PC-3 (cell line): ENCODE measurements at regions of chr18 and their contacts with region 1.

Region 1: DNA sequence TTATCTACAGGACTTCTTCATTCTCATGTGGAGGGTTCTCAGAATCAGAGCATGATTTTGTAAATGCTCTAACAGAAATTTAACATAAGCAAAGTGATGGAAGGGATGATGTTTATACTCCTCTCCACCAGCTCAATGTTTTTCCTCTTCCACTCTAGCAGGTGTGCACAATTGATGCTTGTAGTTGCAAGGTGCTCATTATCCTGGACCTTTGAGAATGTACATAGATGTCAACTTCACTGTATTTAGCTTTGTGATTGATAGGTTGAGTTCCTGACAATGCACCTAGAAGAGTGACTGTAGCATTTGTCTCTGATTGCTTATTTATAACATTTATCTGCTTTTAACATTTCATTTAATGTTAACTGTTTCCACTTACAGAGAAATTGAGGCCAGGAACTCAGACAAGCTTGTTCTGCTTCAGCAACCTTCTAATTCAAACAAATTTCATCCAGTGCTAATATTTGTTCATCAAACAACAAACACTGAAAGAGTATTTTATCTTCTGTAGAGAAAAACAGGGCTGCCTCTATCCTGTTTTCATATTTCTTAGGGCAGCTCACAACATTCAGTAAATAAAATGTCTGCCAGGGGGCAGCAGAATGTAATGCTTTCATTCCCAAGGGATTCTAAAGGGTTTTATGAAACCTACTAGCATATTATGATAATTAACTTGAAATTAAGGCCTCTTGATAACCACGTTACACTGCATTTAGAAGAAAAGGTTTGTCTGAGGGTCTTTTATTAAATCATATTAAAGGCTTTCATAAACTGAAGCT is 127.9 kb upstream of the NOL4 start:
- DNase-seq: peak; percentile 45
- ATAC-seq: peak; percentile 51
- H3K4me3 ChIP-seq: no peak overlapping the region
- H3K27ac ChIP-seq: no peak overlapping the region
- H3K4me1 ChIP-seq: 0 out of 2 replicates have a peak, but pooled peaks cover 3% of the 10 kb centered on the region
- H3K27me3 ChIP-seq: no peaks in the 10 kb centered on the region
- CTCF ChIP-seq: peak; percentile 56

Region 2: DNA sequence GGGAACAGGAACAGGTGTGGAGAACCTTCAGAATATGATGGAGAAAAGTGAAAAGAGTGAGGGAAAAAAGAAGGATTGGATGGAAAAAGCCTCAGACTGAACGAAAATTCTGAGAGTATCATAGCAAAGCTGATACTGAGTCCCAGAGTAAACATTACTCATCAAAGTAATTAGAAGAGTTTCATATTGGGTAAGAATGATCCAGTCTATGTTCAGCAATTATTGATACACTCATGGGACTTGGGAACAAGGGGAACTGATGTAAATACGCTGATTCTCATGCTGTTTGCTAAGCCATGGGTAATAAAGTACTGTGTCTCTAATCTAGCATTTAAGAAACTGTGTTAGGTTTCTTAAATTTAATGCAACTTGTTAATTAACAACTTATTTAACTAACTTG is 92.0 kb after region 1 on chr18:
- CTCF ChIA-PET with region 1: no interaction called
- POLR2A ChIA-PET with region 1: no interaction called
- intact Hi-C with region 1: loop called (anchors 2 kb)
- DNase-seq: peak; percentile 2
- ATAC-seq: no peak; the same call in 1 of the 2 replicates
- H3K4me3 ChIP-seq: no peak overlapping the region
- H3K27ac ChIP-seq: no peak overlapping the region
- H3K4me1 ChIP-seq: peaks cover 8% of the 10 kb centered on the region; the same call in 1 of the 2 replicates
- H3K27me3 ChIP-seq: no peaks in the 10 kb centered on the region
- CTCF ChIP-seq: no peak

Region 3: GRCh38 chr18:34493099-34493544 is 140.5 kb after region 1 on chr18:
- CTCF ChIA-PET with region 1: no interaction called
- POLR2A ChIA-PET with region 1: no interaction called
- intact Hi-C with region 1: loop called (anchors 5 kb)
- DNase-seq: peak; percentile 64
- ATAC-seq: peak; percentile 75
- H3K4me3 ChIP-seq: peak overlapping the region; percentile 70
- H3K27ac ChIP-seq: peak overlapping the region; percentile 79
- H3K4me1 ChIP-seq: peaks cover 6% of the 10 kb centered on the region; the same call in 1 of the 2 replicates
- H3K27me3 ChIP-seq: no peaks in the 10 kb centered on the region
- CTCF ChIP-seq: no peak

Region 4: DNA sequence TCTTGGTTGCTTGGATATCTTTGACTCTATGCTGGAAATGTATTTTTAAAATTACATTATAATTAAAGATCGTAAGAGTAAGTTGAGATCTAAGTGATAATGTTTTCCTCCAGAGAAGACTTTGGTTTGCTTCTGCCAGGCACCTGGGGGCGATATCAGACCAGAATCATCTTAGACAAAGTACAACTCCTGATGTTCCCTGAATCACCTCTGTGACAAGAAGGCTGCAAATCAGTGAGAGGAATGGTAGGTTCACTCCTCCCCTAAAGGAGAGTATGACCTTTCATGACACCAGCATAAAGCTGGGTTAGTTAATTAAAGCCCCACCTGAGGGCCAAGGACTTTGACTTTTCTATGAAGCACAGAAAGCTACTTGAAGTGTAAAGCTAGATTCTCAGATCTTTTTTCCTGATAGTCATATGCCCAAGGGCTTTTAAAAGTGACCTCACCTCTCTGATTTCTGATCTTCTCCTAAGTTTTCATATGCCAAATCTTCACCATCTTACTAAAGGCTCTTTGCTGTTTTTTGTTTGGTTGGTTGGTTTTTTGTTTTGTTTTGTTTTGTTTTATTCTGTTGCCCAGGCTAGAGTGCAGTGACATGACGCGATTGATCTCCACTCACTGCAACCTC is 243.2 kb after region 1 on chr18:
- CTCF ChIA-PET with region 1: no interaction called
- POLR2A ChIA-PET with region 1: no interaction called
- intact Hi-C with region 1: loop called (anchors 5 kb)
- DNase-seq: peak; percentile 8
- ATAC-seq: peak; percentile 42; the same call in 1 of the 2 replicates
- H3K4me3 ChIP-seq: no peak overlapping the region
- H3K27ac ChIP-seq: no peak overlapping the region
- H3K4me1 ChIP-seq: peaks cover 6% of the 10 kb centered on the region
- H3K27me3 ChIP-seq: no peaks in the 10 kb centered on the region
- CTCF ChIP-seq: peak; percentile 42; the same call in 1 of the 2 replicates

Region 5: GRCh38 chr18:34643989-34644388 is 291.4 kb after region 1 on chr18:
- CTCF ChIA-PET with region 1: interaction called, 3 read pairs
- POLR2A ChIA-PET with region 1: no interaction called
- intact Hi-C with region 1: loop called (anchors 1 kb)
- DNase-seq: no peak
- ATAC-seq: no peak
- H3K4me3 ChIP-seq: no peak overlapping the region
- H3K27ac ChIP-seq: no peak overlapping the region
- H3K4me1 ChIP-seq: peaks cover under 1% of the 10 kb centered on the region; the same call in 1 of the 2 replicates
- H3K27me3 ChIP-seq: no peaks in the 10 kb centered on the region
- CTCF ChIP-seq: no peak; the same call in 1 of the 2 replicates

Region 6: DNA sequence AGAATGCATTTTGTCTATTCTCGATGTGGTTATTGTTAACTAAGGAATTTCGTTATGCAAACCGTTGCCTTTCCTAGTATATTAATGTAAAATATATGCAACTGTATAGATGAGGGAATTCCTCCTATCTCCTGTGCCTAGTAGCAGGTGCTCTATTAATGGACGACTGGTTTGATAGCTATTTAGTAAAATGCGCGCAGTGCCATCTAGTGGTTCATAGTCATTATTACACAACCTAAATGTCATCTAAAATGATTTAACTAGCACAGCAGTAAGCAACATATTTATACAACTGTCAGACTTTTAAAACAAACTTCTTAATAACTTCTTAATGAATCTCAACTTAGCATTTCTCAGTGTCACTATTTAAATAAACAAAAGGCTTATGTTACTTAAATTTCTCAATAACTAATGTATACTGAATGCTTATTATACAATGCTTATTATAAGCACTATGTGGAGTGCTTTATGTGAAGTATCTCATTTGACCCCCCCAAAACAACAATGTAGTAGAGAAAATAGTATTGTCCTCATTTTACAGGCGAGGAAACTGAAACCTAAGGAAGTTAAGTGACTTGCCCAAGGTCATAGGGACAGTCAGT is 435.5 kb after region 1 on chr18:
- CTCF ChIA-PET with region 1: no interaction called
- POLR2A ChIA-PET with region 1: no interaction called
- intact Hi-C with region 1: loop called (anchors 2 kb)
- DNase-seq: peak; percentile 58
- ATAC-seq: no peak
- H3K4me3 ChIP-seq: no peak overlapping the region
- H3K27ac ChIP-seq: no peak overlapping the region
- H3K4me1 ChIP-seq: no peaks in the 10 kb centered on the region
- H3K27me3 ChIP-seq: no peaks in the 10 kb centered on the region
- CTCF ChIP-seq: peak; percentile 58